PC-3 (cell line): ENCODE measurements at regions of chr5 and their contacts with region 1.

Region 1: DNA sequence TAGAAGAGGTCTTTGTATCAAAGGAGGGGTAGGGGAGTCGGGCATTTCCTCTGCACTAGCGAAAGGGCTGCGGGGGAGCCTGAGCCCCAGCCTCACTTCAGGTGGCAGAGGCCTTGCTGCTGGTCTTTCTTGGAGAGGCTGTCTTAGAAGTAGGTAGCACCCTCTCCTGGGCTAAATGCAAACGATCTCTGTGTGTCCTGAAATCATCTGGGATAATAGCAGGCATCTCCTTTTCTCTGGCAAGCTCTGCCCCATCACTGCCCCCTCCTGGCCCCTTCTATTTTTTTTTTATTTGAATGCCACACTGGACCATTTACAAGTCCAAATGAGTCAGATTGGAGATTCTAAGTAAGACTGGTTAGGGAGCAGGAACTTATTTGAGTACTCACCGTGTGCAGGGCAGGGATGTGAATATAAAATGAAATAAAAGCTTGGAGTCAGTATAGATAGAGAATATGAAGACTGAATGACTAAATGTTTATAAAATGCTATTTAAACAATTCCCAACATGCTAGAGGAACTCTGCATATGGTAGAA is 137.1 kb downstream of the FGF1 start:
- DNase-seq: peak; percentile 87
- ATAC-seq: peak; percentile 84
- H3K4me3 ChIP-seq: no peak overlapping the region
- H3K27ac ChIP-seq: no peak overlapping the region
- H3K4me1 ChIP-seq: peaks cover 14% of the 10 kb centered on the region
- H3K27me3 ChIP-seq: no peaks in the 10 kb centered on the region
- CTCF ChIP-seq: peak; percentile 89

Region 2: DNA sequence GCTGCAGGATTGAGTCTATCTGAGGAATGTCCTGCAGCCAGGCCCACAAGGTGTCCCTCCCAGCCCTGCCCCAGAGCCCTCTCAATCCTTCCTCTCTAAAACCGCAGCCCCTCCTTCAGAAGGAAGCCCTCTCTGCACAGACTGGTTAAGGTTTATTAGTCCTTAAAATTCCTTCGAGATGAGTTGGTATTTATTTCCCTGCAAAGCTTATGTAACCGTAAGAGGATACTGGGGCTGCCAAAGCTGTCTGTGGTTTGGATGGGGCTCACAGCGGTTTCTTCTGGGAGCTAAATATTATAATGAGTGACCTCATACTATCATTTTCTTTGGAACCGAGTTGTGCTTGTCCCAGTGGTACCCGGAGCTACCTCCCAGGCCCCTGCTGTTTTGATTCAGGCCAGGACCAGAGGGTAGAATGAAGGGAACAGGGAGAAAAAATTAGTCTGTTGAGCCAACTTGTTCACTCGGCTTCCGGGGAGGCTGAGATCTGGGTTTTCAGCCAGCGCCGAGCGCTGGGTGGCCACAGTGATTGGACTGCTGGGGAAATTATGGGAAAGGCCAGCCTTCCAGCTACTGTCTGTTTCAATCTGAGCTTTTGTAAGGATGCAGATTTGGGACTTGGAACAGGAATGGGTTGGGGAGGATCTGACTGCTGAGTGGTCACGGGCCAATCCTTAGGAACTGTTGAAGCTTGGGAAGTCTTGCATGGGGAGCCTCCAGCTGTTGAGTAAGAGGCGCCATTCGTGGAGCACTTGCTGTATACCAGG is 332.7 kb before region 1 on chr5:
- CTCF ChIA-PET with region 1: no interaction called
- POLR2A ChIA-PET with region 1: interaction called, 4 read pairs
- intact Hi-C with region 1: loop called (anchors 1 kb)
- DNase-seq: peak; percentile 97
- ATAC-seq: peak; percentile 95
- H3K4me3 ChIP-seq: peak overlapping the region; percentile 43; the same call in 1 of the 2 replicates
- H3K27ac ChIP-seq: peak overlapping the region; percentile 91
- H3K4me1 ChIP-seq: peaks cover 38% of the 10 kb centered on the region
- H3K27me3 ChIP-seq: no peaks in the 10 kb centered on the region
- CTCF ChIP-seq: no peak

Region 3: DNA sequence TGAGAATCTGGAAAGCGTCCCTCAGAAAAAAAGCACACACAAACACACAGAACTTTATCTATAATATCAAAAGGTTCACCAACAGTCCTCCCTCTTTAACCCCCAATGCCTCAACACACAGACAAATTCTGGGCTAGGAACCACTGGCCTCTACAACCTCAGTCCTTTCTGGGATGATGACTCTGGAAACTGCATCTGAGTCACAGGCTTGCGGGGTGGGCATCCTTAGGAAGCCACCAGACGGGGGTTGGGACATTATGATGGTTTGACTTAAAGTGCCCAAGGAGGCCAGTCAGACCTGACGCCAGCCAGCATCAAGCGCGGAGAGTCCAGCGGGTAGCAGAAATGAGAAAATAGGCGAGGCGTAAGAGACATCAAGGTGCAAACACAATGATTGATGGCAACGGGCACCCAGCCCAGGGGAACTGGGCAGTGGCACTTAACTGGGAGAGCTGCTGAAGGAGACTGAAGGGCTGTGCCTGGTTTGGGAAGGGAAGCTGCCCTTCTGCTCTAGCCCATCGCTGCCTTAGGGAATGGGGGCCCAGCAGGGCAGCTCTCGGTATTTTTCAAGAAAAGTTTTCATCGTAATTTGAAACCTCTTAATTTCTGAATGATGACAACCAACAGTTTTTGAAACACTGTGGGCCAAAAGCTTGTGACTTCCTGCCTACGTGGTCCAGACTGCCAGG is 244.7 kb before region 1 on chr5:
- CTCF ChIA-PET with region 1: no interaction called
- POLR2A ChIA-PET with region 1: no interaction called
- intact Hi-C with region 1: no loop called
- DNase-seq: no peak
- ATAC-seq: no peak
- H3K4me3 ChIP-seq: no peak overlapping the region
- H3K27ac ChIP-seq: no peak overlapping the region
- H3K4me1 ChIP-seq: no peaks in the 10 kb centered on the region
- H3K27me3 ChIP-seq: no peaks in the 10 kb centered on the region
- CTCF ChIP-seq: no peak

Region 4: GRCh38 chr5:142324871-142325724 is 223.7 kb before region 1 on chr5 and contains the start of gene SPRY4:
- CTCF ChIA-PET with region 1: interaction called, 4 read pairs
- POLR2A ChIA-PET with region 1: no interaction called
- intact Hi-C with region 1: loop called (anchors 1 kb)
- DNase-seq: peak; percentile 97
- ATAC-seq: peak; percentile 36
- H3K4me3 ChIP-seq: peak within 1 kb of the TSS; percentile 89
- H3K27ac ChIP-seq: peak within 1 kb of the TSS; percentile 99
- H3K4me1 ChIP-seq: peaks cover 45% of the 10 kb centered on the region
- H3K27me3 ChIP-seq: no peaks in the 10 kb centered on the region
- CTCF ChIP-seq: 0 out of 2 replicates have a peak, but pooled peaks have one; percentile 1
- total RNA-seq, gene SPRY4: 32.1 and 38.4 TPM in 2 replicates

Region 5: DNA sequence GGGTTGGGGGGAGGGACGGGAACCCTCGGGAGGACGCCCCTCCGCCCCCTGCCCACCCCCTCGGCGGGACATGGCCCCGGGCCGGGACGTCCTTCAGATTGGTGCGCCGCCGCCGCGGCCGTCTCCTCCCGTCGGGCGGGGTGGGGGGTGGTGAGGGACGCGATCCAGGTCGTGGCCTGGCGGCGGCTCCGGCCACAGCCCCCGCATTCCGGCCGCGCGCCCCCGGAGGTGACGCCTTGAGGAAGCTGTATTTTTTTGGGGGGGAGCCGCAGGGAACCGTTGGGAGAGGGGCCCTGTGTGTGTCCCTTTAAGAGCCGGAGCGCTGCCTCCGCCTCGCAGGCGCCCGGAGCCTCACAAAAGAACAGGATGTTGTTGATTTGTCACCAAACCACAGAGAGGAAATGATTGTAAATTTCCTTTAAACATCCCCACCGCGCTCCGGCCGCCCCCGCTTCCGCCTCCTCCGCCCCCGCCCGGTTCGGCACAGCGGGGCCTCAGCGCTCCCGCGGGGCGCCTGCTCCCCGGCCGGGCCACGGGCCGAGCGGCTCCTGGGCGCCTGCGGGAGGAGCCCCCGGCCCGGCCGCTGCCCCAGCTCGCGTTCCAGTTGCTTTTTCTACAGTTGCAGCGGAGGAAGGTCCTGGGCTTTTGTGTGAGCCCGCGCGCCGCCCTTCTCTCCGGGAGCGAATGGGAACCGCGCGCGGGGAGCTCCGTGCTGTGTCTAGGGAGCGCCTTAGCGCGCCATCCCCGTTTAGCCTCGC is 191.9 kb before region 1 on chr5:
- CTCF ChIA-PET with region 1: interaction called, 15 read pairs
- POLR2A ChIA-PET with region 1: no interaction called
- intact Hi-C with region 1: loop called (anchors 2 kb)
- DNase-seq: peak; percentile 82
- ATAC-seq: peak; percentile 68
- H3K4me3 ChIP-seq: peak overlapping the region; percentile 75
- H3K27ac ChIP-seq: peak overlapping the region; percentile 63
- H3K4me1 ChIP-seq: peaks cover 23% of the 10 kb centered on the region
- H3K27me3 ChIP-seq: no peaks in the 10 kb centered on the region
- CTCF ChIP-seq: no peak

Region 6: DNA sequence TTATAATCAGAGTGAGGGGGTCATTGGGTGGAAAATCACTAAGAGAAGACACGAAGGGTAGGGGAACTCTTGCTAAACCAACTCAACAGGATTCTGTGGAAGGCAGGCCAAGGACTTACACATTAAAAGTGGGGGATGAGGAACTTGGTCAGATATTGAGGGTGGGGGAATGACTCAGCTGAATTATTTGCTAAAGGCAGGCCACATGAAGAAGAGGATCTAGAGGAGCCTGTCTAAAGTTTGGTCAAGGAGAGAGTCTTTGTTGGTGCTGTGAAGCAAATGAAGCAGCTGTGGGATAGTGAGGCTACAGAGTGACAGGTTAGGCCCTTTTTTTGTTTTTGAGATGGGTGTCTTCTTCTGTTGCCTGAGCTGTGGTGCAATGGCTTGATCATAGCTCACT is 160.1 kb before region 1 on chr5:
- CTCF ChIA-PET with region 1: no interaction called
- POLR2A ChIA-PET with region 1: no interaction called
- intact Hi-C with region 1: loop called (anchors 1 kb)
- DNase-seq: peak; percentile 69
- ATAC-seq: peak; percentile 65
- H3K4me3 ChIP-seq: no peak overlapping the region
- H3K27ac ChIP-seq: peak overlapping the region; percentile 74
- H3K4me1 ChIP-seq: peaks cover 24% of the 10 kb centered on the region
- H3K27me3 ChIP-seq: no peaks in the 10 kb centered on the region
- CTCF ChIP-seq: no peak

Region 7: GRCh38 chr5:142472300-142472951 is 76.4 kb before region 1 on chr5:
- CTCF ChIA-PET with region 1: no interaction called
- POLR2A ChIA-PET with region 1: interaction called, 3 read pairs
- intact Hi-C with region 1: loop called (anchors 10 kb)
- DNase-seq: peak; percentile 89
- ATAC-seq: peak; percentile 96
- H3K4me3 ChIP-seq: no peak overlapping the region
- H3K27ac ChIP-seq: peak overlapping the region; percentile 79
- H3K4me1 ChIP-seq: peaks cover 27% of the 10 kb centered on the region
- H3K27me3 ChIP-seq: no peaks in the 10 kb centered on the region
- CTCF ChIP-seq: no peak

Region 8: GRCh38 chr5:142520886-142521285 is 27.9 kb before region 1 on chr5:
- CTCF ChIA-PET with region 1: interaction called, 15 read pairs
- POLR2A ChIA-PET with region 1: no interaction called
- intact Hi-C with region 1: no loop called
- DNase-seq: peak; percentile 5
- ATAC-seq: peak; percentile 33; the same call in 1 of the 2 replicates
- H3K4me3 ChIP-seq: no peak overlapping the region
- H3K27ac ChIP-seq: no peak overlapping the region
- H3K4me1 ChIP-seq: no peaks in the 10 kb centered on the region
- H3K27me3 ChIP-seq: no peaks in the 10 kb centered on the region
- CTCF ChIP-seq: no peak